ENCODE measurements at regions of chr9 and their contacts with region 1.

Region 1: GRCh38 chr9:129783516-129784361 is 19.2 kb upstream of the TOR1B start:
- DNase-seq: peak; percentile 44 to 83 (median 76)
- ATAC-seq: peak; percentile 99
- H3K4me3 ChIP-seq: no peak overlapping the region
- H3K4me3 Mint-ChIP-seq: peak overlapping the region in 1 of 10 donors; percentile 42
- H3K27ac ChIP-seq: no peak overlapping the region
- H3K27ac Mint-ChIP-seq: no peak overlapping the region
- H3K4me1 ChIP-seq: no peaks in the 10 kb centered on the region
- H3K4me1 Mint-ChIP-seq: peaks cover 0 to 6% (median 4%) of the 10 kb centered on the region in 7 donors
- H3K27me3 ChIP-seq: no peaks in the 10 kb centered on the region
- H3K27me3 Mint-ChIP-seq: peaks cover 0 to 20% (median 0%) of the 10 kb centered on the region in 5 donors

Region 2: DNA sequence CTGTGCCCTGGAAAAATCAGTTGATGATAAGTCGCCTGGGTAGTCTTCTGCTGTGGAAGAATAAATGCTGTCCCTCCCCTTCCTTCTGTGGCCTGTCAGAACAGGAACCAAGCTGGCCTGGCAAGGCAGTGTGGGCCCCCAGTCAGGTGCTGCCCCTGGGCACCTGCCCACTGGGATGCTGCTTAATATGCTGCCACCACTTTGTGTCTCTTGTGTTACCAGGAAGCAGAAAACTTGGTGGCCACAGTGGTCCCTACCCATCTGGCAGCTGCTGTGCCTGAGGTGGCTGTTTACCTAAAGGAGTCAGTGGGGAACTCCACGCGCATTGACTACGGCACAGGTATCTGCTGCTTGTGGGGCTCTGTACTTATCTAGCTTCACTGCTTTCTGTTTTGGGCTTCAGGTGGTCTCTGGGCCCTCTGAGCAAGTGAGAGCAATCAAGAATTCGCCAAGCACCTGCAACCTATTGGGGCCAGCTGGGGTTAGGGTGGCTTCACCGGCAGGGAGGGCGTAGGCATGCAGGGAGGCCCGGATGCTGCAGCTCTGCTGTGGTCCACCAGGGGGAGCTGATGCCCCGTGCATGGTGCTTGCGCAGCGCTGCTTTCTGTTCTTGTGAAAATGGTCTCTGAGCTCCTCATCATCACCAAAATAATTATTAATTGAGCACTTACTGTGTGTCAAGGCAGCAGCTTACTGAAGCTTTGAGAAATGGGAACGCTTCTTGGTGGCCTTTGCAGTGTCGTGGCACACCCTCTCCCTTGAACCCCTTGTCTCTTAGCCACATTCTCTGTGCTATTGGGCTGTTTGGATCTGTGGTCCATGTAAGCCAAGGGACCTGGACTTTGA is 652.2 kb before region 1 on chr9:
- CTCF ChIA-PET with region 1: interaction called, 4 read pairs
- POLR2A ChIA-PET with region 1: no interaction called
- intact Hi-C with region 1: loop called (anchors 1 kb)
- DNase-seq: peak; percentile 71 to 90 (median 81)
- ATAC-seq: peak; percentile 100
- H3K4me3 ChIP-seq: no peak overlapping the region
- H3K4me3 Mint-ChIP-seq: peak overlapping the region in 2 of 10 donors; percentile 10 to 23
- H3K27ac ChIP-seq: peak overlapping the region; percentile 24
- H3K27ac Mint-ChIP-seq: peak overlapping the region in 6 of 9 donors; percentile 11 to 54 (median 46)
- H3K4me1 ChIP-seq: no peaks in the 10 kb centered on the region
- H3K4me1 Mint-ChIP-seq: peaks cover 0 to 9% (median 6%) of the 10 kb centered on the region in 7 donors
- H3K27me3 ChIP-seq: no peaks in the 10 kb centered on the region
- H3K27me3 Mint-ChIP-seq: no peaks in the 10 kb centered on the region

Region 3: DNA sequence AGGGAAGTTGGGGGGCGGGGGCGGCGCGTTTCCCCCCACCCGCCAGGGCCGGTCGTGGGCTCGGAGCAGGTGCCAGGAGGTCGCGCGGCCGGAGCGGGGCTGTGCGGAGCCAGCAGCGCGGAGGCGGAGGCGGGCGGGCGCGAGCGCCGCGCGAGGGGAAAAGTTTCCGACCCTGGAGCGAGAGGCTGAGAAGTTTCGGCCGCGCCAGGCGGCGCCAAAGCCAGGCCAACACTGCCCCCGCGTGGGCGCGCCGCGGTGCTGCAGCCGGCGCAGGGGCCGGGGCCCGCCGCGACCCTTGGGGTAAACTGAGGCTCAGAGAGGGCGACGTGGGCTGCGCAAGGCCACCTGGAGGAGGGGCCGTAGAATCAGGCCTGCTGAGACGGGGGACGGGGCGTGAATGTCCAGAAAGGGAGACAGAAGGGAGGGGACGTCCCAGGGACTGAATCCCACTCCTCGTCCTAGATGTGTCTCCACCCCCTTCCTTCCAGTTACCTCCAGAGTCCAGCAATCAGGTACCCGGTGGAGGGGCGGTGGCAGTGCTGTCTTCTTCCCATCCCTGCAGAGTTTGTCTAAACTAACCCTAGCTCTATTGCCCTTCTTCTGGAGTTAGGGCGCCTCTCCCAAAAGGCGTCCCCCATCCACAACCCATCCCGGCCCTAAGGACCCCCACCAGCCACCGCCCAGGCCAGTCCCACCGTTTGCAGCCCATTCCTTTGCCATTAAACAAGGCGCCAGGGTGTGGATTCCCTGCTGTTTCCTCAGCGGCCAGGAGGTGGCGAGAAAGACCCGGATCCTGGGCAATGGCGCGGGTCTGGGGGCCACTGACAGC is 173.1 kb before region 1 on chr9:
- CTCF ChIA-PET with region 1: interaction called, 4 read pairs
- POLR2A ChIA-PET with region 1: no interaction called
- intact Hi-C with region 1: loop called in 1 of 2 experiments (anchors 1 kb)
- DNase-seq: peak; percentile 53 to 79 (median 71)
- ATAC-seq: peak; percentile 83
- H3K4me3 ChIP-seq: peak overlapping the region; percentile 52
- H3K4me3 Mint-ChIP-seq: peak overlapping the region; percentile 57 to 96 (median 80)
- H3K27ac ChIP-seq: peak overlapping the region; percentile 17
- H3K27ac Mint-ChIP-seq: peak overlapping the region in 5 of 9 donors; percentile 62 to 85 (median 67)
- H3K4me1 ChIP-seq: peaks cover 19 to 21% of the 10 kb centered on the region in 2 donors
- H3K4me1 Mint-ChIP-seq: peaks cover 13 to 44% (median 30%) of the 10 kb centered on the region in 7 donors
- H3K27me3 ChIP-seq: no peaks in the 10 kb centered on the region
- H3K27me3 Mint-ChIP-seq: peaks cover 0 to 4% (median 0%) of the 10 kb centered on the region in 5 donors

Region 4: DNA sequence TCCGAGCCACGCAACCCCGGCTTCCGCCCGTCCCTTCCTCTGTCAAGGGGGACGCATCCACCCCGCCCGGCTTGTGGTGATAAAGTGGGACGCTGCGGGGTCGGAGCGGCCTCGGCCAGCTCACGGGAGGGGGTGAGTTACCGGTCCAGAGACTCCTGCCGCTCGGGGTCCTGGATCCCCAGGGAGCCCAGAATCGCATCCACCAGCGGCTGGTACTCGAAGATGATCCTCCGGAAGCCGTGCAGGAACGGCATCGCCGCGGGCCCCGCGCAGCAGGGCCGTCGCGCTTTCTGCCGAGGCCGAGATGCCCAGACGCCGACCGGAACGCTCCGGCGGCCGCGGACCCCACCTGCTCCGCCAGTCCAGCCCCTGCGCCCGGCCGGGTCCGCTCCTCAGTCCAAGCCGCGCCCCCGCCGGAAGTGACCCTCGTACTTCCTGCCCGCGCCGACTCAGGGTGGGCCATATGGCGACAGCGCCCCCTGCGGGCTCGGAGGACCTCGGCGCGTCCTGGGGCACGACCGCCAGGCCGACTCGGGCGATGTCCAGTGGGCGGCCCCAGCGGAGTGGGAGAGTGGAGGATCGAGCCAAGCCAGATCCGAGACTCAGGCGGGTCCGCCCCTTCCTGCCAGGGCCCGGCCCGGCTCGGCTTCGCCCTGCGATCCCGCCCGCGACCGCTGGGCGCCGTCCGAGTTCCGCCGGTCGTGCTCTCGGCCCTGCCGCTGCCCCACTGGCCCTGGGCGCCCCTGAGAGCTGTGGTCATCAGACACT is 141.8 kb before region 1 on chr9 and contains the start of gene ASB6:
- CTCF ChIA-PET with region 1: no interaction called
- POLR2A ChIA-PET with region 1: no interaction called
- intact Hi-C with region 1: loop called (anchors 1 kb)
- DNase-seq: peak; percentile 80 to 100 (median 87)
- ATAC-seq: peak; percentile 96
- H3K4me3 ChIP-seq: peak within 1 kb of the TSS; percentile 97
- H3K4me3 Mint-ChIP-seq: peak within 1 kb of the TSS; percentile 81 to 90 (median 86)
- H3K27ac ChIP-seq: peak within 1 kb of the TSS; percentile 80
- H3K27ac Mint-ChIP-seq: peak within 1 kb of the TSS; percentile 80 to 95 (median 89)
- H3K4me1 ChIP-seq: peaks cover 16 to 18% of the 10 kb centered on the region in 2 donors
- H3K4me1 Mint-ChIP-seq: peaks cover 19 to 31% (median 23%) of the 10 kb centered on the region in 7 donors
- H3K27me3 ChIP-seq: no peaks in the 10 kb centered on the region
- H3K27me3 Mint-ChIP-seq: no peaks in the 10 kb centered on the region
- total RNA-seq, gene ASB6: 25.0 to 33.2 (median 28.1) TPM

Region 5: DNA sequence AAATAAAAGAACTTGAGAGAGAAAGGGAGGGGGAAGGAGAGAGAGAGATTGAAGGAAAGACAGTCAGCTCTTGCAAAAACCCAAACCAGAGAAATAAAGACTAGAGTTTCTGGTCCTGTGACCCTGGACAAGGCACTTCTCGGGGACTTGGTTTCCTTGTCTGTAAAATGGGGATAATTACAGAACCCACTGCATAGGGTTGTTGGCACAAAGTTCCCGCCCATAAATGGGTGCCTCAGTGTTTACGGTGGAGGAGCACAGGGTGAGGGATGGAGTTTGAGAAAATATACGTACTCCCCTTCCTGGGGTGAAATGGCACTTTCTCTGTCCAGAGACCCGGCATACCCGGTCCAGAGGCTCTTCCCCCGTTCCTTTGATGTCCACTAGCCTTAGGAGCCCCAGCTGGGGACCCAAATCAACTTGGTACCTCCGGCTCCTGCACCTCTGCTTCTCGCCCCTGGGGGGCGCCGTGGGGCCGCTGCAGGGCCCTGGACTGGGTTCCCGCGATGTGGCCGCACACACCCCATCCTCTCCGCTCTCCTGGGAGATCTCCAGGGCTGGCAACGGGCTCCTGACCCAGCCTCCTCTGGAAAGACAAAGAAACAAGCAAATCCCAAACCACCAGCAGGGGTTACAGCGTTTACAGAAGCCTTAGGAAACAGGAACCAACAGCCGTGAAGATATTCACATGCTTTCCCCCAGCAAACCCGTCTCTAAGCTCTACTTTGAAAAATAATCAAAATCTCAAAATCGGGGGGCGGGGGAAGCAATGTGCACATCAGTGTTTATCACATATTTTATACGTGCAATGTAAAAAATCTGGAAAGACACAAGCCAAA is 57.2 kb before region 1 on chr9:
- CTCF ChIA-PET with region 1: interaction called, 20 read pairs
- POLR2A ChIA-PET with region 1: interaction called, 3 read pairs
- intact Hi-C with region 1: loop called (anchors 1 to 2 kb)
- DNase-seq: peak; percentile 30 to 73 (median 56)
- ATAC-seq: peak; percentile 95
- H3K4me3 ChIP-seq: no peak overlapping the region
- H3K4me3 Mint-ChIP-seq: peak overlapping the region in 9 of 10 donors; percentile 16 to 63 (median 55)
- H3K27ac ChIP-seq: no peak overlapping the region
- H3K27ac Mint-ChIP-seq: no peak overlapping the region
- H3K4me1 ChIP-seq: no peaks in the 10 kb centered on the region
- H3K4me1 Mint-ChIP-seq: peaks cover 0 to 4% (median 3%) of the 10 kb centered on the region in 7 donors
- H3K27me3 ChIP-seq: no peaks in the 10 kb centered on the region
- H3K27me3 Mint-ChIP-seq: peaks cover 0 to 23% (median 5%) of the 10 kb centered on the region in 5 donors

Region 6: GRCh38 chr9:129737479-129738274 is 46.1 kb before region 1 on chr9:
- CTCF ChIA-PET with region 1: interaction called, 66 read pairs
- POLR2A ChIA-PET with region 1: interaction called, 4 read pairs
- intact Hi-C with region 1: loop called (anchors 1 kb)
- DNase-seq: peak; percentile 73 to 95 (median 87)
- ATAC-seq: peak; percentile 96
- H3K4me3 ChIP-seq: peak overlapping the region; percentile 91
- H3K4me3 Mint-ChIP-seq: peak overlapping the region; percentile 66 to 84 (median 78)
- H3K27ac ChIP-seq: peak overlapping the region; percentile 76
- H3K27ac Mint-ChIP-seq: peak overlapping the region; percentile 50 to 94 (median 71)
- H3K4me1 ChIP-seq: peaks cover 6% of the 10 kb centered on the region in 2 donors
- H3K4me1 Mint-ChIP-seq: peaks cover 0 to 12% (median 8%) of the 10 kb centered on the region in 7 donors
- H3K27me3 ChIP-seq: no peaks in the 10 kb centered on the region
- H3K27me3 Mint-ChIP-seq: peaks cover 0 to 2% (median 0%) of the 10 kb centered on the region in 5 donors

Region 7: DNA sequence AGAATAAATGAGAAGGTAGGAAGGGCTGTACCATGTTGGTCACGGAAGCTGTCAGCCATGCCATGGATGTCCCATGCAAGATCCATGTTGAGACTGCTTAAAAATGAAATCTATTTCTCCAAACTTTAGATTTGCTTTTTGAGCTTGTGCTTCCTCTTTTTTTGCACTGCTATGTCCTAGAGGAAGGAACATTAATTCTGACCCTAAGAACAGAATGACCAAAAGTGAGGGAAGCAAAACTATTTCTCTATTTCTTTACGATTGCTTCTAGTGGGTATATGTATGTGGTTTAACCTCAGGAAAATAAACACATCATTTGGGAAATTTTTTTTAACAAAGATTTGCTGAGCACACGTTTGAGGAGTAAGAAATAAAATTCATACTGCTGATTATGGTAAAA is 136.1 kb after region 1 on chr9:
- CTCF ChIA-PET with region 1: no interaction called
- POLR2A ChIA-PET with region 1: no interaction called
- intact Hi-C with region 1: no loop called
- DNase-seq: no peak
- ATAC-seq: peak; percentile 34
- H3K4me3 ChIP-seq: no peak overlapping the region
- H3K4me3 Mint-ChIP-seq: no peak overlapping the region
- H3K27ac ChIP-seq: no peak overlapping the region
- H3K27ac Mint-ChIP-seq: peak overlapping the region in 8 of 9 donors; percentile 8 to 84 (median 71)
- H3K4me1 ChIP-seq: peaks cover 0 to 9% of the 10 kb centered on the region in 2 donors
- H3K4me1 Mint-ChIP-seq: peaks cover 6 to 55% (median 16%) of the 10 kb centered on the region in 7 donors
- H3K27me3 ChIP-seq: no peaks in the 10 kb centered on the region
- H3K27me3 Mint-ChIP-seq: no peaks in the 10 kb centered on the region